ENCODE measurements at regions of chr16 and their contacts with region 1.

Region 1: GRCh38 chr16:47018223-47018891 is 44.9 kb upstream of the DNAJA2 start:
- DNase-seq: peak; percentile 71
- ATAC-seq: peak; percentile 99
- H3K4me3 ChIP-seq: no peak overlapping the region
- H3K27ac ChIP-seq: no peak overlapping the region
- H3K4me1 ChIP-seq: peaks cover 5 to 11% of the 10 kb centered on the region in 2 experiments
- H3K27me3 ChIP-seq: no peaks in the 10 kb centered on the region
- CTCF ChIP-seq: peak; percentile 52 to 64 (median 61); a peak in 5 of 6 replicates
- POLR2A ChIP-seq: no peak
- RAD21 ChIP-seq: peak; percentile 65

Region 2: GRCh38 chr16:46736695-46737094 is 281.7 kb before region 1 on chr16:
- CTCF ChIA-PET with region 1: no interaction called
- POLR2A ChIA-PET with region 1: no interaction called
- RAD21 ChIA-PET with region 1: no interaction called
- intact Hi-C with region 1: no loop called
- DNase-seq: no peak
- ATAC-seq: no peak
- H3K4me3 ChIP-seq: no peak overlapping the region
- H3K27ac ChIP-seq: no peak overlapping the region
- H3K4me1 ChIP-seq: no peaks in the 10 kb centered on the region
- H3K27me3 ChIP-seq: no peaks in the 10 kb centered on the region
- CTCF ChIP-seq: no peak
- POLR2A ChIP-seq: no peak
- RAD21 ChIP-seq: no peak

Region 3: DNA sequence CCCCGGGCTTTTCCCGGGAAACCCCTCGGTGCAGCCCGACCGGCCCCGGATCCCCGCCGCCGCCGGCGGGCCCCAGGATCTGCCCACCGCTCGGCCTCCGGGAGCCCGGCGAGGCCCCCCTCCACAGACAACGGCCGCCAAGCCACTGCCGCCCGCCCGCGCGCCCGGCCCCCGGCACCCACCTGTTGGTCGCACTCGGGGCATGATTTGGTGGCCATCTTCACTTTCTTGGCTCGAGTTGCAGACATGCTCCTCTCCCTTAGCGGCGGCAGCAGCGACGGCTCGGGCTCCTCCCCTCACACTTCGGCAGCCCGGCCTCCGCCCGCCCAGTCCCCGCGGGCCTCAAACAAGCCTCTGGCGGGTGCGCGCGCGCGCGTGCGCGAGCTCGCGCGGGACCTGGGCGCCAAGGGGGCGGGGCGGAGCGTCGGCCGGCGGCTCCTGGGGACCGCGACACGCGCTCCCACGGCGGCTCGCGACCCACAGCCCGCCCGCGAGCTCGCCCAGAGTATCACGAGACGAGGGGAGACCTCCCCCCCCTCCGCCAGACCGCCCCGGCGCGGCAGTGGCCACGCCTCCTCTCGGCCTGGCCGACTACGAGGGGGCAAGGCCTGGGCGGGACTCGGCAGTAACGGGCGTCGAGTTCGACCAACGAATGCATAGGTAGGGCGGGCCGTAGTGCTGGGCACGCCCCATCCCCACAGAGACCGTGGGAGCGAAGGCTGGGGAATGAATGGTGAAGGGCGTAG is 187.3 kb before region 1 on chr16 and contains the start of gene C16orf87:
- CTCF ChIA-PET with region 1: no interaction called
- POLR2A ChIA-PET with region 1: no interaction called
- RAD21 ChIA-PET with region 1: no interaction called
- intact Hi-C with region 1: no loop called
- DNase-seq: peak; percentile 82
- ATAC-seq: peak; percentile 94
- H3K4me3 ChIP-seq: peak within 1 kb of the TSS; percentile 82 to 84
- H3K27ac ChIP-seq: peak within 1 kb of the TSS; percentile 80
- H3K4me1 ChIP-seq: peaks cover 3 to 14% of the 10 kb centered on the region in 2 experiments; a peak in 3 of 4 replicates
- H3K27me3 ChIP-seq: no peaks in the 10 kb centered on the region
- CTCF ChIP-seq: no peak
- POLR2A ChIP-seq: peak; percentile 49
- RAD21 ChIP-seq: no peak
- total RNA-seq, gene C16orf87: 10.2 TPM

Region 4: GRCh38 chr16:46947900-46948547 is 70.3 kb before region 1 on chr16:
- CTCF ChIA-PET with region 1: interaction called, 15 read pairs
- POLR2A ChIA-PET with region 1: no interaction called
- RAD21 ChIA-PET with region 1: no interaction called
- intact Hi-C with region 1: loop called (anchors 1 kb)
- DNase-seq: peak; percentile 29
- ATAC-seq: peak; percentile 90
- H3K4me3 ChIP-seq: no peak overlapping the region
- H3K27ac ChIP-seq: no peak overlapping the region
- H3K4me1 ChIP-seq: no peaks in the 10 kb centered on the region
- H3K27me3 ChIP-seq: no peaks in the 10 kb centered on the region
- CTCF ChIP-seq: peak; percentile 63 to 75 (median 65)
- POLR2A ChIP-seq: no peak
- RAD21 ChIP-seq: peak; percentile 89

Region 5: GRCh38 chr16:47073223-47074155 is 55.1 kb after region 1 on chr16:
- CTCF ChIA-PET with region 1: no interaction called
- POLR2A ChIA-PET with region 1: no interaction called
- RAD21 ChIA-PET with region 1: no interaction called
- intact Hi-C with region 1: loop called (anchors 10 kb)
- DNase-seq: no peak
- ATAC-seq: no peak
- H3K4me3 ChIP-seq: no peak overlapping the region
- H3K27ac ChIP-seq: no peak overlapping the region
- H3K4me1 ChIP-seq: no peaks in the 10 kb centered on the region
- H3K27me3 ChIP-seq: no peaks in the 10 kb centered on the region
- CTCF ChIP-seq: no peak
- POLR2A ChIP-seq: no peak
- RAD21 ChIP-seq: no peak